WTC11 (cell line): ENCODE measurements at regions of chr1 and their contacts with region 1.

Region 1: DNA sequence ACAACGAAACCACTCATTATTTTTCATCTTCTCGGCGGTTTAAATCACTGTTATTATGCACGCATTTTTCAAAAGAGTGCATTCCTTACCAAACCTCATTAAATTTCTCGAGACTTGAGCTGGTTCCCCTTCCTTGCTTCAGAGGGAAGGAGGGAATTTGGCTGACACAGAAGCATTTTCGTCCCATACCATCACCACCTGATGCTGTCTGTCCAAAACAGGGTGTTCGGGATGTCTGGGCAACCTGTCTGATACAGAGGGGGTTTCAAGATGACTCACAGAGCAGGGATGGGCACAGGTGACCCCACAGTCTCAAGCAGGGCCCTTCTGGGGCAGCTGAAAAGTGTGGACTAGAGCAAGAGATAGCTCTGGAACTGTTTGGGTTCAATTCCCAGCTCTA is 12.3 kb upstream of the RCC2 start:
- DNase-seq: no peak
- ATAC-seq: no peak
- H3K4me3 Mint-ChIP-seq: no peak overlapping the region
- H3K27ac Mint-ChIP-seq: peak overlapping the region; percentile 63; the same call in 1 of the 2 replicates
- H3K4me1 Mint-ChIP-seq: peaks cover 4% of the 10 kb centered on the region; the same call in 1 of the 2 replicates
- H3K27me3 Mint-ChIP-seq: no peaks in the 10 kb centered on the region; the same call in 1 of the 2 replicates
- CTCF ChIP-seq: no peak

Region 2: DNA sequence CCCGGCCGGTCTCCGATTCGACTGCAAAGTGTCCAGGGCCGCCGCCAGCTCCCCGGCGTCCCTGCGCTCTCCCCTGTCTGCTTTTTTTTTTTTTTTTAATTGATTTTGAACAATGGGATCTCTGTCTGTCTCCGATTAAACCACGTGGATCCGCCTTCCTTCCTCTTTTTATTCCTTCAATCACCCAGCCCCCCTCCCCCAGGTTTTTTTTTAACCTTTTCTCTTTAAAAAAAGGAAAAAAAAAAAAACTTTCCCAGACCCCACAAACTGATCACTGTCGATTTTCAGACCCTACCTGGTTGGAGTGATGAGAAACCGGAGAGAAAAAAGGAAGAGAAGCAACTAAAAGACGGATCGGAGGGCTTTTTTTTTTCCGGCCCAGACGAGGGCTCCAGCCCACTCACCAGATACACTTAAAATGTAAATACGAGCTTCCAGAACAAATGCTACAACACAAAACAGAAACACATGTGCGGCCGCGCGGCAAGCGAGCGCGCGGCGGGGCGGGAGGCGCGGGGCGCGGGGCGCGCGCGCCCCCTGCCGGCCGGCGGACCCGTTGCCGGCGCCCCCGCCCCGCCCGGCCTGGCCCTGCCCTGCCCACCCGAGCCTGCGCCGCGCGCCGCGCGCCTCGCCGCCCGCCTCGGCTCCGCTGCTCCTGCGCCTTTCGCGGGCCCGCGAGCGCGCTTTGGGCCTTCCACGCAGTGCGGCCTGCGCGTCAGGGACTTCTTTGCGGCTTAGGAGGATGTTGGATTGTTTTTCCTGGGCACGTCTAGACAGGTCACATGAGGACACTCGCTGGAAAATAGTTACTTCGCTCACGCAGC is 12.3 kb before region 1 on chr1 and contains the start of gene RCC2:
- CTCF ChIA-PET with region 1: interaction called, 19 read pairs
- POLR2A ChIA-PET with region 1: no interaction called
- DNase-seq: peak; percentile 48
- ATAC-seq: peak; percentile 21
- H3K4me3 Mint-ChIP-seq: peak within 1 kb of the TSS; percentile 98
- H3K27ac Mint-ChIP-seq: peak within 1 kb of the TSS; percentile 97
- H3K4me1 Mint-ChIP-seq: peaks cover 57% of the 10 kb centered on the region
- H3K27me3 Mint-ChIP-seq: peaks cover 10% of the 10 kb centered on the region
- CTCF ChIP-seq: no peak
- total RNA-seq, gene RCC2: 377 to 407 TPM (median 395 TPM) in 3 replicates

Region 3: DNA sequence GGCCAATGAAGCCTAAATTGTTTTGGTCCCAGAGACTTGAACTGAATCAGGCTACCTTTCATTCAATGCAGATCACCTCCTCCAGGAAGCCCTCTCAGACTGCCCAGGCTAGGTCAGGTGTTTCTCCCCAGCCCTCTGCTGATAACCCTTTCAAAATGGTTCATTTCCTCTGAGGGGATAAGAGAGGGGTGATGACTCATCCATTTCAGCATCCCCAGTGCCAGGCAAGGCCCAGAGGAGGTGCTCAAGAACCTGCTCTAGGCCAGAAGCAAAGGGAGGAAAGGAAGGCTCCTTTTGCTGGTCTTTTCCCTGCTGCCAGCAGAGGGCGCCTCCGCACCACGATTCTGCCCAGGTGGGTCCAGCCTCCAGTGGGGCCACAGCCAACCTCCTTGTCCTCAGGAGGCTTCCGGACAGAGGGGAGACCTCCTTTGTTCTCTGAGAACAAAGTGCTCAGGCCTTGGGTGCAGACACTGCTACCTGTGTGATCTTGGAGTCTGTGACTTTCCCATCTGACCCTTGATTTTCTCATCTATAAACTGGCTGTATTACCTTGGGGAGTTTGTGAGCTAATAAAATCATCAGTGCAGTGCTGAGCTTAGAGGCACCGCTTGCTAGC is 42.5 kb after region 1 on chr1:
- CTCF ChIA-PET with region 1: interaction called, 16 read pairs
- POLR2A ChIA-PET with region 1: no interaction called
- DNase-seq: peak; percentile 91
- ATAC-seq: peak; percentile 97
- H3K4me3 Mint-ChIP-seq: no peak overlapping the region
- H3K27ac Mint-ChIP-seq: peak overlapping the region; percentile 40; the same call in 1 of the 2 replicates
- H3K4me1 Mint-ChIP-seq: peaks cover 23% of the 10 kb centered on the region
- H3K27me3 Mint-ChIP-seq: no peaks in the 10 kb centered on the region
- CTCF ChIP-seq: peak; percentile 97

Region 4: DNA sequence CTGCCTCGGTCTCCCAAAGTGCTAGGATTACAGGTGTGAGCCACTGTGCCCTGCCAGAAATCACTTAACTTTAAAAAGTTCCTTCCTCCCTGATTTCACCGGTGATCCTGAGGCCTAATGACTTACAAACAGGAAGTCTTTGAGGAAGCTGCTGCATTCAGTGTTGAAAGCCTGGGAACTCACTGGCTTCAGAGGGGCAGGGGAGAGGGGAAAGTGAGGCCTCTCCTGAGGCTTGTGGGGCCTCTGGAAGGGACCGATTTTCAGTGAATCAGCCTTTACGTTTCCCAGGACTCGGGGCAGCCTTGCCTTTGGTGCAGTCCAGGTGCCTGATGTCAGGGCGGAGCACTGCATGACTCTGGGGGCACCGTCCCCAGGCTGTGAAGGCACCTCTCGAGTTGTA is 57.6 kb after region 1 on chr1:
- CTCF ChIA-PET with region 1: no interaction called
- POLR2A ChIA-PET with region 1: no interaction called
- DNase-seq: no peak
- ATAC-seq: no peak; the same call in 1 of the 2 replicates
- H3K4me3 Mint-ChIP-seq: no peak overlapping the region
- H3K27ac Mint-ChIP-seq: peak overlapping the region; percentile 20; the same call in 1 of the 2 replicates
- H3K4me1 Mint-ChIP-seq: no peaks in the 10 kb centered on the region
- H3K27me3 Mint-ChIP-seq: no peaks in the 10 kb centered on the region
- CTCF ChIP-seq: no peak